ENCODE measurements at regions of chr19 and their contacts with region 1.

Region 1: DNA sequence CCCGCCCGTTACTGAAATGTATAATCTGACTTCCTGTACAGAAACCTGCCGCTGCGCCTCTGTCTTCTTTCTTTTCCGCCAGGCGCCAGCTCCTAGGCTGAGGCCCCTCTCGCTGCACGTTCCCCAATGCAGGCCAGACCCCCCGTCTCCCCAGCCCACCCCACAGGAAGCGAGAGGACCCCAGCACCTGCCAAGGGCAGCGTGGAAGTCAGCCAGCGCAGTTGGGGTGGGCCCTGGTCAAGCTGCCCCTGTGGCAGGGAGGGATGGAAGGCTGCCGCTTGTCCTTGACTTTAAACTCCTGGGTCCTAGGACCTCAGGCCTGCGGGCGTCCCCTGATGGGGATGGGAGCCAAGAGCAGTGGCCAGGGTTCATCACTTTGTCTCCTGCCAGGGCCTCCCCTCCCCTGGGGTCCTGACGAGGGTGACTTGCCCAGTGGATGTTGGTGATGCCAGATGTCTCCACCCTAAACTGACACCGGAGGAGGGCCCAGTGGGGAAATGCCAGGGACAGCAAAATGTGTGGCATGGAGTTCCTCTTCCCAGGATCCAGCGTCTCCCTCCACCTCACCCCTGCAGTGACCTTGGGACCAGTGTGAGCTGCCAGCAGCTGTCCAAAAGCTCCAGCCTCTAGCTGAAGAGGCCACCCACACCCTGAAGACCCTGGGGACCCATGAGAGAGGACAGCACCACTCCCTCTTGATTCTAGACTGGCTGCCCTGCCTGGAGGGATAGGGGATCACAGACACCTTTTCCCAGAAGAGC is 8.5 kb upstream of the MARCHF2 start:
- DNase-seq: no peak
- H3K4me3 ChIP-seq: no peak overlapping the region
- H3K27ac ChIP-seq: no peak overlapping the region
- H3K4me1 ChIP-seq: no peaks in the 10 kb centered on the region
- H3K27me3 ChIP-seq: no peaks in the 10 kb centered on the region
- CTCF ChIP-seq: no peak
- POLR2A ChIP-seq: no peak

Region 2: GRCh38 chr19:8355631-8356402 is 48.8 kb before region 1 on chr19:
- intact Hi-C with region 1: loop called (anchors 10 kb)
- DNase-seq: peak in 1 of 2 donors; percentile 55
- H3K4me3 ChIP-seq: no peak overlapping the region
- H3K27ac ChIP-seq: no peak overlapping the region
- H3K4me1 ChIP-seq: no peaks in the 10 kb centered on the region
- H3K27me3 ChIP-seq: no peaks in the 10 kb centered on the region
- CTCF ChIP-seq: no peak
- POLR2A ChIP-seq: no peak